Activated B cell treated with CpG ODN at 0.5 μM for 24 hours (primary cell): ENCODE measurements at regions of chr6 and their contacts with region 1.

Region 1: GRCh38 chr6:25312703-25313501 is 33.7 kb downstream of the CARMIL1 start:
- DNase-seq: no peak
- ATAC-seq: no peak
- H3K4me3 Mint-ChIP-seq: no peak overlapping the region
- H3K27ac Mint-ChIP-seq: no peak overlapping the region
- H3K4me1 Mint-ChIP-seq: peaks cover 16% of the 10 kb centered on the region
- H3K27me3 Mint-ChIP-seq: no peaks in the 10 kb centered on the region
- CTCF ChIP-seq: no peak

Region 2: DNA sequence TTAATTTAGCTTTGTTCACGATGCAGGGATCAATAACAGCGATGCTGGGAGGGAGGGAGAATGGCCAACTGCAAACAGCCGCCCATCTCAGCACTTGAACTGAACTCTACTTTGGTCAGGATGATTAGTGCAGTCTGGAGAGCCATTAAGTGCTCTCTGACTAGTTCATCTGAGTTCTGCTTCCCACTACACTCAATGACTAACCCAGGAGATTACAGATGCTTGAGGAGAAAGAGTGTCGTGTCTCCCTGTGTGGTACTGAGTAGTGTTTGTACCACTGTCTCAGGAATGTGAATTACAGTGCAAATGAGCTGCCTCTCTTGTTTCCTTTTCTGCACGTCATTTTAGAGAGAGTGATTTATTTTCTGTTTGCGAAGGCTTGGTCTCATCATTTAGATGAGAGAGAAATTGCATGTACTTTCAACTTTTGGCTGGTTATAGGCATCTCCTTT is 10.2 kb before region 1 on chr6:
- CTCF ChIA-PET with region 1: no interaction called
- POLR2A ChIA-PET with region 1: interaction called, 12 read pairs
- intact Hi-C with region 1: no loop called
- DNase-seq: no peak
- ATAC-seq: no peak
- H3K4me3 Mint-ChIP-seq: no peak overlapping the region
- H3K27ac Mint-ChIP-seq: no peak overlapping the region
- H3K4me1 Mint-ChIP-seq: peaks cover 55% of the 10 kb centered on the region
- H3K27me3 Mint-ChIP-seq: no peaks in the 10 kb centered on the region
- CTCF ChIP-seq: no peak

Region 3: DNA sequence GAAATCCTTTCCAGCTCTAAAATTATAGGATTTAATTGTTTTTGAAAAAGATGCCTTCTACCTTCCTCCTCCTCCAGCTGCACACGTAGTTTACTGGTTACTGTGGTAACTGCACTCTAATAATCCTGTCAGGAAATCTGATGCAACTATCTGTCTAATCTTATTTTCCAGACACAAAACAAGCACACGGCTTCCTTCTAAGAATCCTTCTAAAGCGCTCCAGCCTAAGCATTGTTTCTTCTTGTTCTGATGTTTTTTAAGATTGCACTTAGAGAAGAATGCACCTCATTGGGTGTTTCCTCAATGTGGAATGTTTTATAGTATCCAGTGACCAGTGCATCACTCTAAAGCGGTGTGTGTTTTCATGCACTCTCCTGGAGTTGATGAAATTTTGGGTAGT is 29.9 kb after region 1 on chr6:
- CTCF ChIA-PET with region 1: no interaction called
- POLR2A ChIA-PET with region 1: no interaction called
- intact Hi-C with region 1: no loop called
- DNase-seq: no peak
- ATAC-seq: no peak
- H3K4me3 Mint-ChIP-seq: no peak overlapping the region
- H3K27ac Mint-ChIP-seq: no peak overlapping the region
- H3K4me1 Mint-ChIP-seq: peaks cover 5% of the 10 kb centered on the region
- H3K27me3 Mint-ChIP-seq: no peaks in the 10 kb centered on the region
- CTCF ChIP-seq: no peak

Region 4: GRCh38 chr6:25369433-25370181 is 56.7 kb after region 1 on chr6:
- CTCF ChIA-PET with region 1: no interaction called
- POLR2A ChIA-PET with region 1: no interaction called
- intact Hi-C with region 1: no loop called
- DNase-seq: no peak
- ATAC-seq: no peak
- H3K4me3 Mint-ChIP-seq: no peak overlapping the region
- H3K27ac Mint-ChIP-seq: peak overlapping the region; percentile 22
- H3K4me1 Mint-ChIP-seq: peaks cover 70% of the 10 kb centered on the region
- H3K27me3 Mint-ChIP-seq: no peaks in the 10 kb centered on the region
- CTCF ChIP-seq: no peak